ENCODE measurements at regions of chr18 and their contacts with region 1.

Region 1: DNA sequence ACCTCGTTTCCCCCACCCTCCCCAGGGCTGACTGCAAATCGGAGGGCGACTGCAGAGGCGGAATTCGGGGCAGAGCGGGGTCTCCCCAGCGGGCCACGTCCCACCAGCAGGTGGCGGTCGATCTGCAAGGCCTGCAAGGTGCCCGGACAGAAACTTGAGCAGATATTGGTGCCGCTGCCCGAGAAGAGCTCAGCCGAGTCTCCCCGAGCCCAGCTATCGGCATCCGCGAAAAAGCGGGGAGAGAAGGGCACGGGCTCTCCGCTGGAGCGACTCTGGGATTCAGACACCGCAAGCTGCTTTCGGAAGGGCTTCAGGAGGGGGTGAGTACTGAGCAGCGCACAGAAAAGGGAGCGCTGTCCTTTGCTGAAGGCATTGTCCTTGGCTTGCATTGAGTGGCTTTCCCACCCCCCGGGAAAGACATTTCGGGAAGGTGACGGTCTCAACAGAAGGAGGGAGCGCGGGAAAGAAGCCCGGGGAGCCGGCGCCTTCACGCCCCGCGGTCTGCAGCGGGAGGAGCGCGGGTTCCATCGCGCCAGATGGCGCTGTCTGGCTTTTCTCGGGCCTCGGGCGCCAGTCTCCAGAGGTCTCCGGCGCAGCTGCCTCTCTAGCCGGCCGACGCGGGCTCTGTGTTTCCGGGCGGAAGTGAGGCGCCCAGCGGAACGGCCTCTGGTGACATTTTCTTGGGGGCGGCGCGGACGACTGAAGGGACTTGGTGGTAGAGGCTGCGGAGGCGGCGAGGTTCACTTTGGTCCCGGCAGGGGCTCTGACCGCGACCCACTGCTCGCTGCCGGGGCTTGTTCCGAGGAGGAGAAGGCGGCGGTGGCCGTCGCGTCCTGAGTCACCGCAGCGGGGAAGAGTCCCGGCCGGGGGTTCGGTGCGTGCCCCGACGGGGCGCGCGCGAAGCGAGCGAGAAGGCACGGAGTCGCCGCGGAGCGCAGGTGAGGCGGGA is 69.5 kb downstream of the HAUS1 start:
- DNase-seq: peak; percentile 91
- H3K4me3 ChIP-seq: peak overlapping the region; percentile 97
- H3K27ac ChIP-seq: peak overlapping the region; percentile 74
- H3K4me1 ChIP-seq: peaks cover 31% of the 10 kb centered on the region
- CTCF ChIP-seq: peak; percentile 78

Region 2: GRCh38 chr18:46104128-46104911 is 69.3 kb before region 1 on chr18 and contains the start of gene HAUS1:
- CTCF ChIA-PET with region 1: no interaction called
- POLR2A ChIA-PET with region 1: no interaction called
- intact Hi-C with region 1: loop called (anchors 10 kb)
- DNase-seq: peak; percentile 79
- H3K4me3 ChIP-seq: peak within 1 kb of the TSS; percentile 93
- H3K27ac ChIP-seq: peak within 1 kb of the TSS; percentile 36
- H3K4me1 ChIP-seq: peaks cover under 1% of the 10 kb centered on the region
- CTCF ChIP-seq: no peak
- total RNA-seq, gene HAUS1: 24.8 and 26.4 TPM in 2 replicates

Region 3: GRCh38 chr18:46250084-46250811 is 76.6 kb after region 1 on chr18:
- CTCF ChIA-PET with region 1: interaction called, 3 read pairs
- POLR2A ChIA-PET with region 1: interaction called, 3 read pairs
- intact Hi-C with region 1: loop called (anchors 5 kb)
- DNase-seq: peak; percentile 85
- H3K4me3 ChIP-seq: peak overlapping the region; percentile 62
- H3K27ac ChIP-seq: peak overlapping the region; percentile 78
- H3K4me1 ChIP-seq: peaks cover 27% of the 10 kb centered on the region
- CTCF ChIP-seq: no peak

Measured in OCI-LY7 (cell line).